H1 (cell line): ENCODE measurements at regions of chr7 and their contacts with region 1.

Region 1: DNA sequence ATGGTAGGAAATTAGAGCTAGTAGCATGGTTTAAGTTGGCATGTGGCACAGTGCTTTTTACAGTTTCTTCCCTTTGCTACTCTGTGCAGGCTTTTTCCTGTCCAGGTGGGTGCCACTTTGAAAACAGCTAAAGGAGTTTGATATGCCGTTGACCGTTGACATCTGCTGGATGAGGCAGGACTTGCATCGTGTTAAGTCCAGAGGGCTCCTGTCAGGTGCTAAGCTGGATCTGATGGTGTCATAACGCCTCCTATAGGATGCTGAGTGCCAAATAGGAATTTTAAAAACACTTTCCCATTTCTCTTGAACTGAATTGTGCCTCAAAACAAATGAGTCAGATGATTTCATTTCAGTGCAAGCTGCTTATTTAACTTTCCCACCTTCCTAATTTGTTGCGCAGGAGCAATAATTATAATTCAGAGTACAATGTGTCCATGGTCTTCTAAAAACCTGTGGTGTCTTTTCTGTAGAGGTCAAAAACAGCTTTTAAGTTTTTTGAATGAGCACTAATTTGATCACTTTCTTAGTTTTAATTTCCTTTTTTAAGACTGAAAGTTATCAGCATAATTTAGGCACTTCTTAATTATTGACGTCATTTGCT is 178.3 kb downstream of the CDCA7L start:
- DNase-seq: peak in 1 of 2 experiments; percentile 73
- H3K4me3 ChIP-seq: no peak overlapping the region
- H3K27ac ChIP-seq: no peak overlapping the region
- H3K4me1 ChIP-seq: peaks cover 0 to 14% (median 7%) of the 10 kb centered on the region in 4 experiments; a peak in 5 of 7 replicates
- H3K27me3 ChIP-seq: no peaks in the 10 kb centered on the region
- CTCF ChIP-seq: peak; percentile 79 to 100 (median 98)
- EP300 ChIP-seq: no peak
- POLR2A ChIP-seq: no peak
- RAD21 ChIP-seq: peak; percentile 100

Region 2: GRCh38 chr7:21261627-21262594 is 505.5 kb before region 1 on chr7:
- CTCF ChIA-PET with region 1: interaction called, 47 read pairs
- POLR2A ChIA-PET with region 1: no interaction called
- DNase-seq: peak; percentile 36 to 62
- H3K4me3 ChIP-seq: peak overlapping the region in 1 of 4 experiments; percentile 12; a peak in 2 of 8 replicates
- H3K27ac ChIP-seq: no peak overlapping the region
- H3K4me1 ChIP-seq: peaks cover 0 to 12% (median 5%) of the 10 kb centered on the region in 4 experiments; a peak in 5 of 7 replicates
- H3K27me3 ChIP-seq: peaks cover 0 to 2% (median 0%) of the 10 kb centered on the region in 4 experiments; a peak in 2 of 7 replicates
- CTCF ChIP-seq: peak; percentile 26 to 62 (median 51)
- EP300 ChIP-seq: no peak; a peak in 1 of 3 replicates
- POLR2A ChIP-seq: no peak
- RAD21 ChIP-seq: peak; percentile 55 to 65

Region 3: GRCh38 chr7:21706546-21706945 is 60.9 kb before region 1 on chr7:
- CTCF ChIA-PET with region 1: interaction called, 10 read pairs
- POLR2A ChIA-PET with region 1: interaction called, 3 read pairs
- DNase-seq: no peak
- H3K4me3 ChIP-seq: no peak overlapping the region
- H3K27ac ChIP-seq: no peak overlapping the region
- H3K4me1 ChIP-seq: no peaks in the 10 kb centered on the region
- H3K27me3 ChIP-seq: no peaks in the 10 kb centered on the region
- CTCF ChIP-seq: no peak
- EP300 ChIP-seq: no peak
- POLR2A ChIP-seq: no peak
- RAD21 ChIP-seq: no peak

Region 4: GRCh38 chr7:21743493-21743892 is 23.9 kb before region 1 on chr7:
- CTCF ChIA-PET with region 1: interaction called, 20 read pairs
- POLR2A ChIA-PET with region 1: interaction called, 3 read pairs
- DNase-seq: no peak
- H3K4me3 ChIP-seq: no peak overlapping the region
- H3K27ac ChIP-seq: no peak overlapping the region
- H3K4me1 ChIP-seq: no peaks in the 10 kb centered on the region
- H3K27me3 ChIP-seq: no peaks in the 10 kb centered on the region
- CTCF ChIP-seq: no peak
- EP300 ChIP-seq: no peak
- POLR2A ChIP-seq: no peak
- RAD21 ChIP-seq: no peak

Region 5: DNA sequence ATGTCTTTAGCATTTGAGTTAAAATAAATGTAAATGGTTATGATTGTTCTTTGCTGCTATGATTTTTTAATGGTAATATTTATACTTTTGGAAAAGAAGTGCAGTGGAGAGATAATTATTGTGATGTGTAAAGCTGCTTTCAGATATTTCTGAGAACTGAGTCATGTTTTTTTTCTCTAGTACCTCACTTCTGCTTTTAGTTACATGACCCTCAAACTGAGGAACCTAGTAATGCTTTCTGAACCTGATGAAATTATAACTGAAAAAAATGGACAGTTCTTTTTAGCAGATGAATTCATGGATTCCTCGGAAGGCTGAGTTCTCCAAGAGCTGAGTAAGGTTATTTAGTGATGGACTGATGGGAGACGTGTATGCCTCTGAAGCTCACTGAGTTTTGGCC is 10.5 kb after region 1 on chr7:
- CTCF ChIA-PET with region 1: interaction called, 23 read pairs
- POLR2A ChIA-PET with region 1: no interaction called
- DNase-seq: no peak
- H3K4me3 ChIP-seq: no peak overlapping the region
- H3K27ac ChIP-seq: no peak overlapping the region
- H3K4me1 ChIP-seq: peaks cover 0 to 9% (median 6%) of the 10 kb centered on the region in 4 experiments; a peak in 5 of 7 replicates
- H3K27me3 ChIP-seq: no peaks in the 10 kb centered on the region
- CTCF ChIP-seq: no peak
- EP300 ChIP-seq: no peak
- POLR2A ChIP-seq: no peak
- RAD21 ChIP-seq: no peak

Region 6: GRCh38 chr7:21806388-21806787 is 39.0 kb after region 1 on chr7:
- CTCF ChIA-PET with region 1: no interaction called
- POLR2A ChIA-PET with region 1: no interaction called
- DNase-seq: no peak
- H3K4me3 ChIP-seq: no peak overlapping the region
- H3K27ac ChIP-seq: no peak overlapping the region
- H3K4me1 ChIP-seq: no peaks in the 10 kb centered on the region
- H3K27me3 ChIP-seq: no peaks in the 10 kb centered on the region
- CTCF ChIP-seq: no peak
- EP300 ChIP-seq: no peak
- POLR2A ChIP-seq: no peak
- RAD21 ChIP-seq: no peak